Naive thymus-derived CD8-positive, alpha-beta T cell (primary cell): ENCODE measurements at regions of chr14 and their contacts with region 1.

Region 1: DNA sequence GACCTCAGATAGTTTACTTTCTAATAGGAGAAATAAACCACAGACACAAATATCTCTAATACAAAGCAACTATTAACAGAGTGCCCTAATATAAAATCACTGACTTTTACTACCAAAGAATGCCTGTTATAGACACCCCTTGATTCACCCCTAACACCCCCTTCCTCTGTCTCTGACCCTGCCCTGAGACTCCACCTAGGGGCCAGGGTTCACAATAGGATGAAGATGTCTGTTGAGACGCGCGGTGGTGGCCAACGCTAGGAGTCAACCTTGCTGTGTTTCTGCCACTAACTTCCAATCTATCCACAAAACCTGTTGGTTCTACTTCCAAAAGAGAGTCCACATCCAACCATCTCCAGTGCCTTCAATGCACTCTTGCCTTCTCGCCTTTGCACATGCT is 10.9 kb upstream of the TC2N start:
- DNase-seq: peak in 1 of 10 donors; percentile 65
- ATAC-seq: no peak
- H3K4me3 Mint-ChIP-seq: peak overlapping the region in 1 of 10 donors; percentile 15
- H3K27ac Mint-ChIP-seq: peak overlapping the region in 8 of 10 donors; percentile 1 to 97 (median 88)
- H3K4me1 Mint-ChIP-seq: peaks cover 49 to 92% (median 79%) of the 10 kb centered on the region in 4 donors
- H3K27me3 Mint-ChIP-seq: no peaks in the 10 kb centered on the region

Region 2: DNA sequence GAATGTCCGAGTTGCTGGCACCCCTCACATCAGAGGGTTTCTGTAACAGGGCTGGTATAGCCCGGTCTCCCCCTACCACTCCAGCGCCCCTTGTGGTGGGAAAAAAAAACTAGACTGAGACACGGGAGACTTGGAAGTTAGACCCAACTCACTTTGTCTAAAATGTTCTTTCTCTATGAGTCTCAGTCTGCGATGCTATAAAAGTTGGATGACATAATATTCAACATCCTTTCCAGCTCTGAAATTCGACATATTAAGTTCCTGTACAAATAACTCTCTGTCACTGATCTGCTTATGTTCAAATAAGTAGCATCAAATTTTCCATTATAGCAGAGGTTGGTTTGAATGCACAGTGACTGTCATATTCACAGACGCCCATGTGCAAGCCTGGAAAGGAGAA is 14.7 kb after region 1 on chr14:
- POLR2A ChIA-PET with region 1: interaction called, 317 read pairs
- DNase-seq: peak in 1 of 10 donors; percentile 23
- ATAC-seq: no peak
- H3K4me3 Mint-ChIP-seq: peak overlapping the region in 1 of 10 donors; percentile 8
- H3K27ac Mint-ChIP-seq: peak overlapping the region; percentile 23 to 95 (median 74)
- H3K4me1 Mint-ChIP-seq: peaks cover 38 to 79% (median 61%) of the 10 kb centered on the region in 4 donors
- H3K27me3 Mint-ChIP-seq: no peaks in the 10 kb centered on the region